PC-9 (cell line): ENCODE measurements at regions of chr11 and their contacts with region 1.

Region 1: GRCh38 chr11:17760102-17761029 is 25.8 kb downstream of the KCNC1 start:
- DNase-seq: peak; percentile 41 to 57
- H3K4me3 ChIP-seq: no peak overlapping the region
- H3K27ac ChIP-seq: no peak overlapping the region
- H3K4me1 ChIP-seq: no peaks in the 10 kb centered on the region
- H3K27me3 ChIP-seq: peaks cover 21% of the 10 kb centered on the region
- CTCF ChIP-seq: peak; percentile 69

Region 2: GRCh38 chr11:17810746-17811145 is 50.4 kb after region 1 on chr11:
- CTCF ChIA-PET with region 1: interaction called, 3 read pairs
- POLR2A ChIA-PET with region 1: no interaction called
- intact Hi-C with region 1: loop called (anchors 5 kb)
- DNase-seq: peak in 1 of 2 experiments; percentile 24
- H3K4me3 ChIP-seq: no peak overlapping the region
- H3K27ac ChIP-seq: no peak overlapping the region
- H3K4me1 ChIP-seq: peaks cover 32% of the 10 kb centered on the region
- H3K27me3 ChIP-seq: no peaks in the 10 kb centered on the region
- CTCF ChIP-seq: no peak

Region 3: DNA sequence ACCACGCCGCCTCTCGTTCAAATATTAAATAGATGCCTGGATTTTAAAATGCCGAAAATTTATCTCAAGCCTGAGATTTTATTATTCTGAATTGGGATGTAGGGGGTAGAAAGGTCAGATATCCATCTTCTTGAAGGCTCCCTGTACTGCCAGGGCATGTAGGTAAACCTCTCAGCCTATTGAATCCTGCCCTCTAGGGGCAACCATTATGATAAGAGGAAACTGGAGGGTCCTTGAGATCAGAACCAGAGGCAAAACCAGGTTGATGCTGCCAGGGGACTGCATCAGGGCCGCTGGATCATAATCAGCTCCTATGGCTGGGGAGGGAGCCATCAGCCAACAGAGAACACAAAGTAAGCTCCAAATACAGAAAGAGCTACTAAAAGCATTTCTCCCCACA is 66.6 kb after region 1 on chr11:
- CTCF ChIA-PET with region 1: no interaction called
- POLR2A ChIA-PET with region 1: no interaction called
- intact Hi-C with region 1: loop called (anchors 1 kb)
- DNase-seq: no peak
- H3K4me3 ChIP-seq: no peak overlapping the region
- H3K27ac ChIP-seq: no peak overlapping the region
- H3K4me1 ChIP-seq: no peaks in the 10 kb centered on the region
- H3K27me3 ChIP-seq: no peaks in the 10 kb centered on the region
- CTCF ChIP-seq: no peak; the same call in 1 of the 2 replicates